ENCODE measurements at regions of chr2 and their contacts with region 1.

Region 1: GRCh38 chr2:101883863-101884262 is 107.9 kb upstream of the IL1R2 start:
- DNase-seq: no peak
- ATAC-seq: peak; percentile 95
- H3K4me3 ChIP-seq: no peak overlapping the region
- H3K27ac ChIP-seq: no peak overlapping the region
- H3K4me1 ChIP-seq: no peaks in the 10 kb centered on the region
- H3K27me3 ChIP-seq: no peaks in the 10 kb centered on the region
- CTCF ChIP-seq: peak; percentile 50 to 70 (median 63); a peak in 5 of 6 replicates
- EP300 ChIP-seq: no peak
- POLR2A ChIP-seq: no peak
- RAD21 ChIP-seq: peak; percentile 64

Region 2: DNA sequence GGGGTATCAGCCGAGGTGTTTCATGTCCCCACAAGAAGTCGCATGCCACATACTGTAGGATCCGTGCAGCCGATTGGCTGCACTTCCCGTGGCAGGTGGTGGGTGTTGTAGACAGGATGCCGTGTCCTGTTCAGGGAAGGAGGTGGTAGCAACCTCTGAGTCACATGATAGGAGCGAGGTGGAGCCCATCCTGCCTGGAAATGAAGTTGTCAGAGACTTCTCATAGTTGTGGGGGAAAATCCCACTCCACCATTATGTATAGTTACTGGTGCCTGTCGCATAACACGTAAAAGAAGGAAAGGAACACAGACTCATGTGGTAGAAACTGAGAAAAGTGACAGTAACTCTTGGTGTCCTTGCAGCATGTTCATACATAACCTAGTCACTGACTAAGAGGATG is 16.5 kb after region 1 on chr2:
- CTCF ChIA-PET with region 1: interaction called, 35 read pairs
- POLR2A ChIA-PET with region 1: interaction called, 4 read pairs
- RAD21 ChIA-PET with region 1: interaction called, 12 read pairs
- SMC1A ChIA-PET with region 1: interaction called, 21 read pairs
- in situ Hi-C with region 1: no loop called
- intact Hi-C with region 1: no loop called
- DNase-seq: peak; percentile 71
- ATAC-seq: peak; percentile 97
- H3K4me3 ChIP-seq: no peak overlapping the region; the same call in 1 of the 2 replicates
- H3K27ac ChIP-seq: no peak overlapping the region
- H3K4me1 ChIP-seq: peaks cover 5% of the 10 kb centered on the region
- H3K27me3 ChIP-seq: no peaks in the 10 kb centered on the region
- CTCF ChIP-seq: no peak
- EP300 ChIP-seq: peak; percentile 63 to 89; a peak in 3 of 4 replicates
- POLR2A ChIP-seq: no peak
- RAD21 ChIP-seq: no peak

Region 3: GRCh38 chr2:101993772-101994171 is 109.9 kb after region 1 on chr2:
- CTCF ChIA-PET with region 1: interaction called, 71 read pairs
- POLR2A ChIA-PET with region 1: no interaction called
- RAD21 ChIA-PET with region 1: interaction called, 59 read pairs
- SMC1A ChIA-PET with region 1: interaction called, 64 read pairs
- in situ Hi-C with region 1: no loop called
- intact Hi-C with region 1: no loop called
- DNase-seq: no peak
- ATAC-seq: no peak
- H3K4me3 ChIP-seq: no peak overlapping the region
- H3K27ac ChIP-seq: no peak overlapping the region
- H3K4me1 ChIP-seq: peaks cover 2% of the 10 kb centered on the region; the same call in 1 of the 2 replicates
- H3K27me3 ChIP-seq: peaks cover 0 to 7% of the 10 kb centered on the region in 2 experiments; a peak in 3 of 4 replicates
- CTCF ChIP-seq: no peak
- EP300 ChIP-seq: no peak
- POLR2A ChIP-seq: no peak
- RAD21 ChIP-seq: no peak

Region 4: GRCh38 chr2:102013206-102014040 is 129.6 kb after region 1 on chr2:
- CTCF ChIA-PET with region 1: interaction called, 166 read pairs
- POLR2A ChIA-PET with region 1: no interaction called
- RAD21 ChIA-PET with region 1: interaction called, 61 read pairs
- SMC1A ChIA-PET with region 1: interaction called, 105 read pairs
- in situ Hi-C with region 1: no loop called
- intact Hi-C with region 1: no loop called
- DNase-seq: no peak
- ATAC-seq: peak; percentile 49
- H3K4me3 ChIP-seq: no peak overlapping the region
- H3K27ac ChIP-seq: no peak overlapping the region
- H3K4me1 ChIP-seq: peaks cover 3% of the 10 kb centered on the region; the same call in 1 of the 2 replicates
- H3K27me3 ChIP-seq: no peaks in the 10 kb centered on the region
- CTCF ChIP-seq: no peak
- EP300 ChIP-seq: no peak
- POLR2A ChIP-seq: no peak
- RAD21 ChIP-seq: no peak

Region 5: DNA sequence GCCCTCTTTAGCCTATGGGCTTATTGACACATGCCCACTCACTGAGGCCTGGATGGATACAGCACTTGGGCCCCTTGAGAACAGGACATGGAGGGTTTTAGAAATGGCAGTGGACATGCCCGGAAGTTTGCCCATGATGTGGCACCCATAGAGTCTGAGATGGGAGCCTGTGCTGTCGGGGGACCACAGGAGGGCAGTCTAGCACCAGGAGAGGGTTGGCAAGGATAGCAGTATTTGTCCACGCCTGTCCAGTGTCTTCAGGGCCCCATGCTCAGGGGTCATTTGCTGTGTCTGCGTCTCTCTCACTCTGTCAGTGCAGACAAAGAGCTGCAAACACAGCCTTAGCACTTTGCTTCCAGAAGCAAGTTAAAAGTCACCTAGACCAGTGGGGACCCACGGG is 351.6 kb after region 1 on chr2:
- CTCF ChIA-PET with region 1: interaction called, 169 read pairs
- POLR2A ChIA-PET with region 1: no interaction called
- RAD21 ChIA-PET with region 1: interaction called, 113 read pairs
- SMC1A ChIA-PET with region 1: interaction called, 103 read pairs
- in situ Hi-C with region 1: loop called (anchors 5 kb)
- intact Hi-C with region 1: loop called (anchors 1 kb)
- DNase-seq: no peak
- ATAC-seq: peak; percentile 46
- H3K4me3 ChIP-seq: no peak overlapping the region
- H3K27ac ChIP-seq: no peak overlapping the region
- H3K4me1 ChIP-seq: peaks cover 10% of the 10 kb centered on the region; the same call in 1 of the 2 replicates
- H3K27me3 ChIP-seq: no peaks in the 10 kb centered on the region
- CTCF ChIP-seq: peak in 2 of 3 experiments; percentile 27 to 36; a peak in 2 of 6 replicates
- EP300 ChIP-seq: no peak
- POLR2A ChIP-seq: no peak
- RAD21 ChIP-seq: peak; percentile 59

Region 6: DNA sequence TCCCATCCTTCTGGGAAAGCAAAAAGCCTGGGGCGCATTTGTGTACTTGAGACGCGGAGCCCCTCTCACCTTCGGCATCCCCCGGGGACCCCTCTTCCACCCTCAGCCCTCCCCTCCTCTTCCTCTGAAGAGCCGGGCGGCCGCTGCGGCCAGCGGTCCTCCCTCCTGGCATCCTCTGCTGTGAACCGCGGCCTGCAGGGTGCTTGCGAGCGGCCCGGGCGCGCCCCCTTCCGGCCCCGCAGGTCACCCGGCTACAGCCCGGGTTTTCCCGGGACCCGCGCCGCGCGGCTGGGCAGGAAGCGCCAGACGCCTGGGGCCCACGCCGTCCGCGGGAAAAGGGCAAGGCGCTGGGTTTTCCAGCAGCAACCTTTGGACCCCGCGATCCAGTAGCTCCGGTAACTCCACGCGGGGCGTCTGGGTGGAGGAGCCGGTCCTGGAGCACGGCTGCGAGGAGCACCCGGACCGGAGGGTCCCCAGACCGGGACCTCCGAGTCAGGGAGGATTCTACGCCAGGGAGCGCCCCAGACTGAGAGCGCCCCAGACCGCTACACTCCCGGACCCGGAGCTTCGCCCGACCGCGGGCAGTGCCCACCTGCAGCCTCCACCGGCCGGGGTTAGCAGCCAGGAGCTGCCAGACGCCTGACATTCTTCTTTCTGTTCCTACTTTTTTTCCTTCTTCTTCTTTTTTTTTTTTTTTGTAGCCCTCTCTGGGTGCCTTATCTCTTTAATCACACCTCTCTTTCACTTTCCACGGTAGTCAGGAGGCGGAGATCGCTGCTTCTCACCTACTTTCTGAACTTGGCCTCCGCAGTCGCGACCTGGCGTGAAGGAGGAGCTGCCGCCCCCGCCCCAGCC is 471.9 kb after region 1 on chr2 and contains the start of gene IL18R1:
- CTCF ChIA-PET with region 1: interaction called, 5 read pairs
- POLR2A ChIA-PET with region 1: no interaction called
- RAD21 ChIA-PET with region 1: no interaction called
- SMC1A ChIA-PET with region 1: interaction called, 3 read pairs
- in situ Hi-C with region 1: no loop called
- intact Hi-C with region 1: loop called (anchors 5 kb)
- DNase-seq: peak; percentile 42
- ATAC-seq: peak; percentile 88
- H3K4me3 ChIP-seq: peak within 1 kb of the TSS; percentile 96
- H3K27ac ChIP-seq: peak within 1 kb of the TSS; percentile 91
- H3K4me1 ChIP-seq: peaks cover 4% of the 10 kb centered on the region
- H3K27me3 ChIP-seq: no peaks in the 10 kb centered on the region
- CTCF ChIP-seq: peak; percentile 72 to 91 (median 82)
- EP300 ChIP-seq: no peak
- POLR2A ChIP-seq: no peak
- RAD21 ChIP-seq: peak; percentile 76
- polyA plus RNA-seq, gene IL18R1: 3.5 to 3.8 TPM

Measured in GM12878 (cell line).